Endothelial cell of umbilical vein (primary cell): ENCODE measurements at regions of chr19 and their contacts with region 1.

Region 1: GRCh38 chr19:29941828-29942403 is at the start of gene URI1:
- DNase-seq: peak; percentile 80
- H3K4me3 ChIP-seq: peak within 1 kb of the TSS; percentile 81 to 99 (median 93)
- H3K27ac ChIP-seq: no peak within 1 kb of the TSS
- H3K4me1 ChIP-seq: peaks cover 10% of the 10 kb centered on the region
- H3K27me3 ChIP-seq: peaks cover 0 to 4% of the 10 kb centered on the region in 2 experiments
- CTCF ChIP-seq: no peak
- POLR2A ChIP-seq: peak; percentile 60
- total RNA-seq, gene URI1: 26.3 and 28.9 TPM in 2 replicates

Region 2: DNA sequence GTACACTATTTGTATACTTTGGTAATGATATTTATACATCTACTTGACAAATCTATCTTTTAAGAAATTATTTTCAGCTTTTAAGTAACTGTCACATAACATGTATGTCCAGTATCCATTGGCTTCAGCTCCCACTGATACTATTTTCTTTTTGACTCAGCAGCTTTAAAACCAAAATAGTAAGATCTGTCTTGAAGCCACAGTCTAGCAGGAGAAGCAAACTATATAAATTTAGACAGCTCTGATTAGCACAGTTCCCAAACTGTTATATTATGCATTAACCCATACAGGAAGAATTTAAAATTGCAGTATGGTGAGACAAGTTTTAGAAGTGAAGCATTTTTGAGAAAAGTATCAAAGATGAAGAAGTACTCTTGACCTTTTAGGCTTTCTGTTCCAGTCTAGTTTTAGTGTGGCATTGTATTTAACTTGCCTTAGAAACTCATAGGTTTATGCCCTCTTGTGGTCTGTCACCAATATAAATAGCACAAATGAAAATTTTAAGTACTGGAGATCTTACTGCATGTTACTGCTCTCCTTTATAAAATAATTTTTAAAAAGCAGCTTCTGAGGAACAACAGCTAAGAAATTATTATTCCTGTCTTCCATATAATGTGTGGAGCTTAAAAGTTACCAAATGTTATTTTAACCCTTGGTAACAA is 24.8 kb after region 1 on chr19:
- CTCF ChIA-PET with region 1: interaction called, 11 read pairs
- POLR2A ChIA-PET with region 1: no interaction called
- dilution Hi-C with region 1: no loop called
- intact Hi-C with region 1: no loop called
- DNase-seq: peak; percentile 14
- H3K4me3 ChIP-seq: no peak overlapping the region
- H3K27ac ChIP-seq: no peak overlapping the region
- H3K4me1 ChIP-seq: no peaks in the 10 kb centered on the region
- H3K27me3 ChIP-seq: no peaks in the 10 kb centered on the region
- CTCF ChIP-seq: no peak
- POLR2A ChIP-seq: no peak

Region 3: GRCh38 chr19:29978080-29978479 is 36.2 kb after region 1 on chr19:
- CTCF ChIA-PET with region 1: no interaction called
- POLR2A ChIA-PET with region 1: no interaction called
- dilution Hi-C with region 1: no loop called
- intact Hi-C with region 1: no loop called
- DNase-seq: no peak
- H3K4me3 ChIP-seq: no peak overlapping the region
- H3K27ac ChIP-seq: no peak overlapping the region
- H3K4me1 ChIP-seq: no peaks in the 10 kb centered on the region
- H3K27me3 ChIP-seq: no peaks in the 10 kb centered on the region
- CTCF ChIP-seq: no peak
- POLR2A ChIP-seq: no peak